ENCODE measurements at regions of chr9 and their contacts with region 1.

Region 1: GRCh38 chr9:36023260-36024048 is 13.3 kb upstream of the RECK start:
- DNase-seq: peak; percentile 43 to 75 (median 62)
- ATAC-seq: peak; percentile 43 to 71
- H3K4me3 ChIP-seq: no peak overlapping the region
- H3K27ac ChIP-seq: no peak overlapping the region
- H3K4me1 ChIP-seq: no peaks in the 10 kb centered on the region
- H3K27me3 ChIP-seq: no peaks in the 10 kb centered on the region

Region 2: GRCh38 chr9:35903049-35903448 is 120.4 kb before region 1 on chr9:
- intact Hi-C with region 1: loop called in 1 of 4 experiments (anchors 10 kb)
- DNase-seq: no peak
- ATAC-seq: no peak
- H3K4me3 ChIP-seq: no peak overlapping the region
- H3K27ac ChIP-seq: no peak overlapping the region
- H3K4me1 ChIP-seq: peaks cover 23% of the 10 kb centered on the region
- H3K27me3 ChIP-seq: no peaks in the 10 kb centered on the region

Region 3: GRCh38 chr9:35954942-35955546 is 68.4 kb before region 1 on chr9:
- intact Hi-C with region 1: loop called (anchors 2 to 5 kb)
- DNase-seq: peak in 2 of 3 donors; percentile 31 to 47
- ATAC-seq: peak; percentile 68 to 74
- H3K4me3 ChIP-seq: no peak overlapping the region
- H3K27ac ChIP-seq: no peak overlapping the region
- H3K4me1 ChIP-seq: no peaks in the 10 kb centered on the region
- H3K27me3 ChIP-seq: no peaks in the 10 kb centered on the region

Region 4: DNA sequence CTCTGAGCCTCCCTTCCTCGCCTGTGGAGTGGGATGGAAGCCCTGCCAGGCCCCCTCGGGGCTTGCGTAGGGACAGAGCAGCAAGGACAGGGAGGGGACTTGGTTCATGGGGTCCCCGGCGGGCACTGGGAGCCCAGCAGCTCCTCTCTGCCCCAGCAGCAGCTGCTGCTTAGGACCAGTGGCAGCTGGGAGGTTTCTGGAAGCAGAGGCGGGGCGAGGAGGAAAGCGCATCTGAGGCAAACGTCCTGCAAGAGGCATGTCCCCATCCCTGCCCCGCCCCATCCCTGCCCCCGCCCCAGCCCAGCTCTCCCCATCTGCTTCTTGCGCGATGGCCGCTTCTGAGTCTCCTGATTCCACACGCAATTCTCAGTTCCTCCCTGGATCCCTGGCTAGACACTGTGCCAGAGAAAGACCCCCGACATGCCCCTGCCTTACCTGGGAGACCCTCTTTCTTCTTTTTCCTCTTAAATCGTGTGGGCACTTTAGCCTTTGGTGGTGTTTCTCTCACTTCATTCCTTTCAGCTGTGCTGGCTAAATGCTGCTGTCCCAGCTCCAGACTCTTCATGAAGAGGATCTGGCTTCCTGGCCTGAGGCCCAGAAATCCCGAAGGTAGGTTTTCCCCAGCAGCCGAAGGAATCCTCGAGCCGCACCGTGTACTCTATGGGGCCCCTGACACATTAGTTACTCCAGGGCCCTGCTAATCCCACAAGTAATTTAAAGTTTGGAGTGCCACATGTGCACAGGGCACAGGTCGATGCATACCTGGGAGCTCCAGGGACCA is 61.1 kb before region 1 on chr9:
- intact Hi-C with region 1: loop called in 3 of 4 experiments (anchors 5 kb)
- DNase-seq: peak in 2 of 3 donors; percentile 49 to 54
- ATAC-seq: peak in 1 of 2 donors; percentile 46
- H3K4me3 ChIP-seq: no peak overlapping the region
- H3K27ac ChIP-seq: no peak overlapping the region
- H3K4me1 ChIP-seq: no peaks in the 10 kb centered on the region
- H3K27me3 ChIP-seq: no peaks in the 10 kb centered on the region

Region 5: DNA sequence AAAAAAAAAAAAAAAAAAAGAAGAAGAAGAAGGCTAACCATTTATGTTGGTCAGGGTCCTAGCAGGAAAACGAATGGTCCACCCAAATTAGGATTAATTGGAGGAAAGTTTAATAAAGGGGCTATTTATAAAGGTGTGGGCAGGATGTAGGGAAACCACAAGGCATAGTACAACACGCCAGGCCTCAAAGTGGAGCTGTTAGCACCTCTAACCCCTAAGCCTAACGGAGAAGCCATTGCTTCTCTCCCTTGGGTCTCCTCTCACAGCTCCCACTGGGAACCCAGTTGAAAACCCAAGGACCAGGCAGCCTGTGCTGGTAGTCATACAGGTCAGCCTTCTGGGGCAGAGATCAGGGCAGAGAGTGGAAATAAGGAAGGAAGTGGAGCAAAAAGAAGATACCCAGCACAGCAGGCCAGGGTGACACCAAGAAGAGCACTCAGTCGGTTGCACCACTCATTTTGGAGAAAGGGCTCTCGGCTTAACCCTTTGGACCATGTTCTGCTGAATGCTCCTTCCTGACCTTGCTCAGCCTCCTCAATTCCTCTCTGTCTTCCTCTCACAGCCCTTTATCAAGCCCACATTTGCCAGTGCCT is 104.3 kb after region 1 on chr9:
- intact Hi-C with region 1: no loop called
- DNase-seq: peak in 1 of 3 donors; percentile 39
- ATAC-seq: peak; percentile 56 to 61
- H3K4me3 ChIP-seq: no peak overlapping the region
- H3K27ac ChIP-seq: peak overlapping the region; percentile 13
- H3K4me1 ChIP-seq: peaks cover 2% of the 10 kb centered on the region
- H3K27me3 ChIP-seq: no peaks in the 10 kb centered on the region

Region 6: GRCh38 chr9:36862206-36863145 is 839.0 kb after region 1 on chr9:
- intact Hi-C with region 1: no loop called
- DNase-seq: peak in 1 of 3 donors; percentile 54
- ATAC-seq: peak in 1 of 2 donors; percentile 47
- H3K4me3 ChIP-seq: no peak overlapping the region
- H3K27ac ChIP-seq: no peak overlapping the region
- H3K4me1 ChIP-seq: no peaks in the 10 kb centered on the region
- H3K27me3 ChIP-seq: no peaks in the 10 kb centered on the region